Dendritic cell treated with granulocyte-macrophage colony-stimulating factor and Interleukin-4, amounts not matched to agents 40 ng/mL and 50 ng/mL, for 4 days (primary cell): ENCODE measurements at regions of chr19 and their contacts with region 1.

Region 1: GRCh38 chr19:23686621-23687423 is at the start of gene ZNF675:
- H3K4me3 Mint-ChIP-seq: peak within 1 kb of the TSS; percentile 98
- H3K27ac Mint-ChIP-seq: peak within 1 kb of the TSS; percentile 99
- H3K4me1 Mint-ChIP-seq: peaks cover 13% of the 10 kb centered on the region
- H3K27me3 Mint-ChIP-seq: no peaks in the 10 kb centered on the region

Region 2: DNA sequence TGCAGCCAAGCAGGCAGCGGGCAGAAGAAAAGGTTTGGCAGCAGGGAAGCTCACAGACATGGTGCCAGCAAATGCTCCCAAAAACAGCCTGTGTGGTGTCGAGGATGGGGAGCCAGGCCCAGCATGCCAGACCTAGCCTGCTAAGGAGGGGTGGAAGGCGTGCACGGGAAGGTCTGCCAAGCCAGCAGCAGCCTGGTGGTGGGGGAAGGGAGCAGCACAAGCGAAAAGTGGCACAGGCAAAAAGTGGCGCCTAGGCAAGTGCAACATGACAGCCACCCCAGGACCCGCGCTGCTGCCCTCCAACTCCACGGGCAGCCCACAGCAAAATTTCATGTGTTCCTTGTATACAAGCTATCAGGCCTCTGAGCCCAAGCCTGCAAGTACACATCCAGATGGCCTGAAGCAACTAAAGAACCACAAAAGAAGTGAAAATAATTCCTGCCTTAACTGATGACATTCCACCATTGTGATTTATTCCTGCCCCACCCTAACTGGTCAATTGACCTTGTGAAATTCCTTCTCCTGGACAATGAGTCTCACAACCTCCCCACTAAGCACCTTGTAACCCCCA is 137.6 kb before region 1 on chr19:
- intact Hi-C with region 1: no loop called
- H3K4me3 Mint-ChIP-seq: no peak overlapping the region
- H3K27ac Mint-ChIP-seq: no peak overlapping the region
- H3K4me1 Mint-ChIP-seq: no peaks in the 10 kb centered on the region
- H3K27me3 Mint-ChIP-seq: no peaks in the 10 kb centered on the region

Region 3: GRCh38 chr19:23762884-23763711 is 76.3 kb after region 1 on chr19:
- intact Hi-C with region 1: loop called (anchors 5 kb)
- H3K4me3 Mint-ChIP-seq: peak overlapping the region; percentile 85
- H3K27ac Mint-ChIP-seq: peak overlapping the region; percentile 61
- H3K4me1 Mint-ChIP-seq: peaks cover 14% of the 10 kb centered on the region
- H3K27me3 Mint-ChIP-seq: peaks cover 8% of the 10 kb centered on the region

Region 4: DNA sequence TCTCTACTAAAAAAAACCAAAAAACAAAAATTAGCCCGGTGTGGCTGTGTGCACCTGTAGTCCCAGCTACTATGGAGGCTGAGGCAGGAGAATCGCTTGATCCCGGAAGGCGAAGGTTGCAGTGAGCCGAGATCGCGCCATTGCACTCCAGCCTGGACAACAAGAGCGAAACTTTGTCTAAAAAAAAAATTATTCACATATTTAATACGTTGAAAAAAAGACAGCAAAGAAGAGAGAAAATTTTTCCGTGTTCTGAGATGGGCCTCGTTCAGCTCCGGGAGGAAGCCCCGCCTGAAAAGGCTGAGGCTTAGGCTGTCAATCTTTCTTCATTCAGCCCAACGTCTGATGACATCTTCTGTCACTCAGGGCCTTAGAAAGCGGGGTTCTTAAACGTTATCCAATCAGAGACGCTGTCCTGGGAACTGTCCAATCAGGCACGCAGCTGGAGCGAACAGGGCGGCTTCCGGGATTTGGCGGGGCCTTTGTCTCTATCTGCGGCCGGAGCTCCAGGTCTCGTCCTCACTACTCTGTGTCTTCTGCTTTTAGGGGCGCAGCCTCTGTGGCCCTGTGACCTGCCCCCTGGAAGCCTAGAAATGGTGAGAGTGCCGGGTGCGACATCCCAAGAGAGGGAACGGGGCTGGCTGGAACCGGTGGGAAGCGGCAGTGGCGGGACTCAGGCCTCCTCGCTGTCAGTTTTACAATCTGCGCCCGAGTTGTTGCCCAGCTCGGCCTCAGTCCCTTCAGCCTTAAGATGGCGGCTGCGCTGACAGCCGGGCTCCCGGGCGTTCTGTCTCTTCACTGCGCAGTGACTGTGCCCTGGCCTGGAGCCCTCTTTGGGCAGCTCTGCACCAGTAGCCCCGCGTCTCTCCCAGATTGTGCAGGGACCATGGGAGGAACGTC is 227.8 kb after region 1 on chr19 and contains the start of gene ZNF726:
- intact Hi-C with region 1: loop called (anchors 2 kb)
- H3K4me3 Mint-ChIP-seq: peak within 1 kb of the TSS; percentile 98
- H3K27ac Mint-ChIP-seq: peak within 1 kb of the TSS; percentile 90
- H3K4me1 Mint-ChIP-seq: no peaks in the 10 kb centered on the region
- H3K27me3 Mint-ChIP-seq: no peaks in the 10 kb centered on the region